ENCODE measurements at regions of chr5 and their contacts with region 1.

Region 1: DNA sequence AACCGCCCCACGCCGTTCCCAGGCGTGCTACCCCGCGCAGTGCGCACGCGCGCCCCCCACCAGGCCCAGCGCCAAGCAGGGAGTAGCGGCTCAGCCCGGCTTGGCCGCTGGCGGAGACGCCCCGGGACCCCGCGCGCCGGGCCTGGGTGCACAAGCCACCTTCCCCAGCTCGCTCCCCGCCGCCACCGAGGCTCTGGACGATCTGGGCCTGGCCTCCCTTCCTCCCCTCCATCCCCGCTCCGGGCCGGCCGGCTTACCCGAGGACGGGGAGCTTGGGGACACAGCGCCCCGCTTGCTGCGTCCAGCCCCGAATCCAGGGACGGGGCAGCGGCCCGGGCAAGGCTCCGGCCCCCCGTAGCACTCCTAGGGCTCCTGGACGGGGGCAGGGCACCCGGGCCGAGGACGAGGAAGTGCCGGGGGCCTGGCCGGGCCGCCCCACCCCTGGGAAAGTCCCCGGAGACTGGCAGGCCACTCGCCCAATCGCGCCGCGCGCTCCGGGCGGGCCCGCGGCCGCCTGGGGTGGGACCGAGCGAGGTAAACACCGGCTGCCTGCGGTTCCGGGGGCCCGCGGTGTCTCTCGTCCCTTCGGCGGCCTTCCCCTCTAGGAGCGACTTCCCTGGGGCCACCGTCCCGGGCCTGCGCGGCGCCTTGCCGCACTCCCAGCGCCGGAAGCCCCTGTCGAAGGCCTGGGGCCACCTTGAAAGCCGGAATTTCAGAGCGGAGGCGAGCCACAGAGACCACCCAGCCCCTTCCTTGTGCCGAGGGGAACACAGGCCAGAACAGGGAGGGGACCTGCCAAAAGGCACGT is at the start of gene TNIP1:
- DNase-seq: peak; percentile 94

Region 2: GRCh38 chr5:151051066-151051930 is 29.5 kb before region 1 on chr5:
- CTCF ChIA-PET with region 1: interaction called, 18 read pairs
- POLR2A ChIA-PET with region 1: interaction called, 3 read pairs
- DNase-seq: peak; percentile 81

Region 3: DNA sequence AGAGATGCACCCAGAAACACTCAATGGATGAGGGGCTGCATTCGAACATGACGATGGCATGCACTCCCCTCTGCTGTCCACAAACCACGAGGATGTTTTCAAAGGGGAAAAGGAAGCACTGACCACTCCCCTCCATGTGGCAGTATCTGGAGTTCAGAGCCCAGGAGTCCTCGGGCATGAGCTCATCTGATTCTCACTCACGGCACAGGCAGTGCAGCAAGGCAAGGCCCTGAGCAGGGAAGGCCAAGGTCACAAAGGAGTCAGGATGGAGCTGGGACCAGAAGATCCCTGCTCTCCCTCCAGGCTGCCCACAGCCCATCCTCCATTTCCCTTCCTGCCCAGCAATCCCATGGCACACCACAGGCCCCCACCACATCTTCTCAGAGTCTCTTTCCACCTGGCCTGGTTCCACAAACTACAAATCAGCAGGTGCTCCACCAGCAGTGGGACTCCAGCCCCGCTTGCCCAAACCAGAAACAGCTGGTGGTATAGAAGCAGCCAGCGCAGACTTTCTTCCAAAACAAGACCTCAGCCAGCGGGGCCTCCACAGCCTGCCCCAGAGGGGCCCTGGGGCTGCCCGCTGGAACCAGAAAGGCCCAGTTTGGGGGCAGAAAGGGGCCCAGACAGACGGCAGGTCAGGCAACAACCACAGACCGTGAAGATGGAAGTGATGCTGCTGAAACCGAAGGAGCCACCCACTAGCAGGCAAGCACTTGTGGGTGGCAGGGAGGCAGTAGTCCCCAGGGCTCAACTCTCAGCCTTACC is 12.2 kb before region 1 on chr5:
- CTCF ChIA-PET with region 1: interaction called, 6 read pairs
- POLR2A ChIA-PET with region 1: interaction called, 20 read pairs
- DNase-seq: no peak

Region 4: GRCh38 chr5:151105561-151105960 is 24.7 kb after region 1 on chr5:
- CTCF ChIA-PET with region 1: no interaction called
- POLR2A ChIA-PET with region 1: no interaction called
- DNase-seq: no peak

Region 5: DNA sequence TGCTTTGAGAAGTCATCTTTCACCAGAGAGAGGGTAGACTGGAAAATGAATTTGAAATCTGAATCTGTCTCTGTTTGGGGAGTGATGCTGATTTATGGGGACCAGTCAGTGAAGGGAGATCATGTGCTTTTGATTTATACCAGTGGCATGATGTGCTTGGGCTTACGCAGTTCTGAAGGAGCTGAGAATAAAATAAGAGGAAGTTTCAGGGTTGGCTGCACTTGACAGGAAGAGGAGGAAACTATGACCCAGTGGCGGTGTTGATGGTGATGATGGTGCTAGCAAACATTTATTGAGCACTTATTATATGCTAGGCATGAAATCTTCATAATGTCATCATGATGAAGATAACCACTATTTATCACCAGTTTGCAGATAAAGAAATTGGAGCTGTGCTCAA is 980.3 kb after region 1 on chr5:
- CTCF ChIA-PET with region 1: no interaction called
- POLR2A ChIA-PET with region 1: no interaction called
- DNase-seq: no peak